Ascending aorta (tissue), 2 donors: ENCODE measurements at regions of chr10 and their contacts with region 1.

Region 1: GRCh38 chr10:118106426-118106825 is 59.7 kb upstream of the RAB11FIP2 start:
- DNase-seq: no peak
- H3K4me3 ChIP-seq: no peak overlapping the region
- H3K27ac ChIP-seq: no peak overlapping the region
- H3K4me1 ChIP-seq: no peaks in the 10 kb centered on the region
- H3K27me3 ChIP-seq: no peaks in the 10 kb centered on the region
- CTCF ChIP-seq: peak in 1 of 3 experiments; percentile 29

Region 2: DNA sequence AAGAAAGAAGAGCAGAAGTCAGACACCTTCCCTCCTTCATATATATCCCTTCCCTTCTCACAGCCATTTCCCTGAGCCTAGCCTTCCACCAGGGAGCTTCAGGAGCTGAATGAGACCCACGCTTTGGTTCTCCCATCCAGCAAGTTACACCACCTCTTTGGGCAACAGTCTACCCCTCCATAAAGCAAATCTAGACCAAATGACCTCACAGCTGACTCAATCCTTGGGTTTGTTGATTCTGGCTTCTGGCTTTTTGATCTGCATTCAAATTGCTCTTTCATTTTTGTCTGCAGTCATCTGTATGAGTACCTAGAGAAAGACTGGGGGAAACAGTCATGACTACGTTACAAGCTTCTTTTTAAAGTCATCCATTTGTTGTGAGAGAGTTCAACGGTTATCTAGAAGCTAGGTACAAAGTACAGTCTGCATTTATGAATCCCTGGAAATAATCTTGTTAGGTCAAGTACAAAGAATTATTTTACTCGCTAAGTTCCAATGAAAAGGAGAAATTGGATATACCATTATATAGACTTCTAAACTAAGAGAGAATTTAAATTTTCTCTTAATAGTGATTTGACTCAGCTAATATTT is 146.0 kb before region 1 on chr10:
- intact Hi-C with region 1: loop called (anchors 10 kb)
- DNase-seq: no peak
- H3K4me3 ChIP-seq: no peak overlapping the region
- H3K27ac ChIP-seq: no peak overlapping the region
- H3K4me1 ChIP-seq: no peaks in the 10 kb centered on the region
- H3K27me3 ChIP-seq: no peaks in the 10 kb centered on the region
- CTCF ChIP-seq: no peak

Region 3: DNA sequence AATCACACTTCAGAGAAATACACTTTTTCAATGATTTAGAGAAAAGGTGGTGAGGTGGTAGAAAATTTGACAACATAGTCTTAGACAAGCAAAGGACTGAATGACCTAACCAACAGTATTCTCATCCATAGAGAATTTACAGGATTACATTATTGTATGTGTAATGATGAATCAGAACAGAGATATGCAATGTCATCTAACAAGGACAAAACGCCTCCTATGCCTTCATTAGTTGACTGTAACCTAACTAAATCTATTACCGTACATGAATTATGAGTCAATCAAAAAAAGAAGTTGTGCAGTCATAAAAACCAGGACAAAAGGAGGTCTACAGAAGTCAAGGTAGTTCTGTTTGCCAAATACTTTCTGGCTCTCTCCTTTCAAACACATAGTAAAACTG is 126.2 kb before region 1 on chr10:
- intact Hi-C with region 1: no loop called
- DNase-seq: no peak
- H3K4me3 ChIP-seq: no peak overlapping the region
- H3K27ac ChIP-seq: no peak overlapping the region
- H3K4me1 ChIP-seq: no peaks in the 10 kb centered on the region
- H3K27me3 ChIP-seq: no peaks in the 10 kb centered on the region
- CTCF ChIP-seq: no peak

Region 4: DNA sequence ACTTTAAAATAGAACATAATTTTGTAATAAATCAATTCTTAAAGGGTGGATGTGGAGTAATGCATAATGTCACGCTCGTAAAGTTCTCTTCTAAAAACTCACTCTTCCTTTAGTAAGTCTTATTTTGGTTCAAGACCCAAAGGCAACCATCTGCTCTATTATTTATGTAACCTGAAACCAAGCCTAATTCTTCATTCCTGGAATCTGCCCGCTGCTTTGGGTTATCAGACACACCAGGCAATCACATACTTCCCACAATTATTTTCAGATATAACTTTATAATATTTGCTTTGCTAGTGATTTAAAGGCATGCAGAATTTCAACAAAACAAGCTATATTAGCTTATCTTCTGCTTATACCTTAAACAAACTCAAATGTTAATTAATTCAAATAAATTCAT is 98.7 kb before region 1 on chr10:
- intact Hi-C with region 1: no loop called
- DNase-seq: no peak
- H3K4me3 ChIP-seq: no peak overlapping the region
- H3K27ac ChIP-seq: no peak overlapping the region
- H3K4me1 ChIP-seq: no peaks in the 10 kb centered on the region
- H3K27me3 ChIP-seq: no peaks in the 10 kb centered on the region
- CTCF ChIP-seq: no peak

Region 5: DNA sequence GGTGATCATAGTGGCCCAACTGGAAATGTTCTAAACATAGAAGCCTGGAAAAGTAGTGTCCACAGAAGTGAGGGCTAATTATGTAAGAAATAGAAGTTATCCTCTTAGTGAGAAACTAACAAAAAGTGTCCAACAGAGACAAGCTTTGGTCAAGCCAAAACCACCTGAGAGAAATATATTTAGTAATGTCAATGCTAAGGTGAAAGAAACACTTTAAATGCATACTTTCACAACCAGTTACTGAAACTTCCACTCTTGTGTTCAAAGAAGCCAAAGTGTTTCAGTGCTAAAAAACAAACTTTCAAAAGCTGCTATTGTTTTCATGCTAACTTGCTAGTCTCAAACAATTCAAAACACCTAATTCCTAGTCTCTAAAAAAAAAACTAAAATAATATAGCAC is 77.8 kb before region 1 on chr10:
- intact Hi-C with region 1: loop called (anchors 10 kb)
- DNase-seq: no peak
- H3K4me3 ChIP-seq: no peak overlapping the region
- H3K27ac ChIP-seq: no peak overlapping the region
- H3K4me1 ChIP-seq: peaks cover 0 to 2% of the 10 kb centered on the region in 2 donors
- H3K27me3 ChIP-seq: no peaks in the 10 kb centered on the region
- CTCF ChIP-seq: no peak

Region 6: GRCh38 chr10:118080817-118081216 is 25.6 kb before region 1 on chr10:
- intact Hi-C with region 1: no loop called
- DNase-seq: no peak
- H3K4me3 ChIP-seq: no peak overlapping the region
- H3K27ac ChIP-seq: no peak overlapping the region
- H3K4me1 ChIP-seq: no peaks in the 10 kb centered on the region
- H3K27me3 ChIP-seq: no peaks in the 10 kb centered on the region
- CTCF ChIP-seq: no peak

Region 7: GRCh38 chr10:118096022-118096421 is 10.4 kb before region 1 on chr10:
- intact Hi-C with region 1: no loop called
- DNase-seq: no peak
- H3K4me3 ChIP-seq: no peak overlapping the region
- H3K27ac ChIP-seq: no peak overlapping the region
- H3K4me1 ChIP-seq: no peaks in the 10 kb centered on the region
- H3K27me3 ChIP-seq: no peaks in the 10 kb centered on the region
- CTCF ChIP-seq: no peak